Panc1 (cell line): ENCODE measurements at regions of chr6 and their contacts with region 1.

Region 1: GRCh38 chr6:45743028-45743615 is 272.5 kb downstream of the CLIC5 start:
- DNase-seq: no peak
- ATAC-seq: no peak
- H3K4me3 ChIP-seq: no peak overlapping the region
- H3K27ac ChIP-seq: no peak overlapping the region
- H3K4me1 ChIP-seq: no peaks in the 10 kb centered on the region
- H3K27me3 ChIP-seq: no peaks in the 10 kb centered on the region
- CTCF ChIP-seq: no peak

Region 2: GRCh38 chr6:44635486-44635885 is 1107.6 kb before region 1 on chr6:
- CTCF ChIA-PET with region 1: no interaction called
- POLR2A ChIA-PET with region 1: interaction called, 13 read pairs
- in situ Hi-C with region 1: no loop called
- intact Hi-C with region 1: no loop called
- DNase-seq: no peak
- ATAC-seq: no peak
- H3K4me3 ChIP-seq: no peak overlapping the region
- H3K27ac ChIP-seq: no peak overlapping the region
- H3K4me1 ChIP-seq: no peaks in the 10 kb centered on the region; the same call in 1 of the 2 replicates
- H3K27me3 ChIP-seq: peaks cover 2% of the 10 kb centered on the region; the same call in 1 of the 2 replicates
- CTCF ChIP-seq: no peak

Region 3: GRCh38 chr6:46263707-46264086 is 520.6 kb after region 1 on chr6:
- CTCF ChIA-PET with region 1: no interaction called
- POLR2A ChIA-PET with region 1: no interaction called
- in situ Hi-C with region 1: no loop called
- intact Hi-C with region 1: no loop called
- DNase-seq: no peak
- ATAC-seq: no peak
- H3K4me3 ChIP-seq: no peak overlapping the region
- H3K27ac ChIP-seq: no peak overlapping the region
- H3K4me1 ChIP-seq: no peaks in the 10 kb centered on the region
- H3K27me3 ChIP-seq: no peaks in the 10 kb centered on the region; the same call in 1 of the 2 replicates
- CTCF ChIP-seq: no peak